ENCODE measurements at regions of chr6 and their contacts with region 1.

Region 1: GRCh38 chr6:32195652-32195901 is 3.1 kb upstream of the GPSM3 start:
- DNase-seq: peak; percentile 100
- ATAC-seq: peak; percentile 88
- H3K4me3 Mint-ChIP-seq: peak overlapping the region; percentile 94
- H3K27ac Mint-ChIP-seq: peak overlapping the region; percentile 99
- H3K4me1 Mint-ChIP-seq: peaks cover 22% of the 10 kb centered on the region
- H3K27me3 Mint-ChIP-seq: no peaks in the 10 kb centered on the region
- CTCF ChIP-seq: no peak

Region 2: DNA sequence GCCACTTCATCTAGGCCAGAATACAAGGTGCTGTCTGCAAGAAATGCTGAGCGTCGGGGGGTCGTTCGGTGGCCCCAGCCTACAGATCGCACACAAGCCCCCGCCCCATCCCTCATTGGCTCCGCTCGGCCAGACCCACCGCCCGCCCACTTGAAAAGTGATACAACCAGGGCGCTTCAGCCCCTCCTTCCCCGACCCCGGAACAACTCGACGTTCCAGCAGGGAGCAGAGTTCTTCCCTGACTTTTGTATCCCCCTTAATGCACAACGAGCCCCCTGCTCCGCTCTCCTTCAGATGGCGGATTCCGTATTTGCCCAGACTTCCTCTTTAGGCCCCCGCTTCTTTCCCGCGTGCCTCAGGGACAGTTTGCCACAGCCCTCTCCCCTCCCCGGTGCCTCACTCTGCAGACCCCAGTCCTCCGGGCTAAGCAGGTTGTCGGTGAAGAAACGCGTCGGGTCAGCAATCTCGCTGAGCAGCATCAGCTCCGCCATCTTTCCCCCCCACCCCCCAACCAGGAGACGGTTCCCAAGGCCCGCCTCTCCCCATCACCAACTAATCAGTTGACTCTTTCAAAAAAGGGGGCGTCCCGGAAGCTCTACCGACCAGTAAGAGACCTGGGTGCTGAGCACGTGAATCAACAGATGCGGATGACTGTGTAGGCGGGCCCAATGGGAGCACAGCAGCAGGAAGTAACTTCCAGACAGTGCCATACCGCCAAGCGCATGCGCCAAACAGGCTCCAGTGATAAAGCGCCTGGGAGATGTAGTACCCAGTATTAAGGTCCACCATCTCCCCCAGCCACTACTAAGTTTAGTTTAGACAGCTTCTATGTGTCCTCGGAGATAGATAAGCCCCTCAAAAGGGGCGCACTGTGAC is 67.6 kb before region 1 on chr6 and contains the start of gene ATF6B:
- CTCF ChIA-PET with region 1: interaction called, 10 read pairs
- POLR2A ChIA-PET with region 1: interaction called, 5 read pairs
- intact Hi-C with region 1: loop called (anchors 2 kb)
- DNase-seq: peak; percentile 100
- ATAC-seq: peak; percentile 93
- H3K4me3 Mint-ChIP-seq: peak within 1 kb of the TSS; percentile 98
- H3K27ac Mint-ChIP-seq: peak within 1 kb of the TSS; percentile 97
- H3K4me1 Mint-ChIP-seq: peaks cover 37% of the 10 kb centered on the region
- H3K27me3 Mint-ChIP-seq: no peaks in the 10 kb centered on the region
- CTCF ChIP-seq: no peak
- total RNA-seq, gene ATF6B: 54.1 to 55.2 TPM

Region 3: GRCh38 chr6:32177788-32178546 is 17.6 kb before region 1 on chr6 and contains the start of gene RNF5:
- CTCF ChIA-PET with region 1: interaction called, 5 read pairs
- POLR2A ChIA-PET with region 1: interaction called, 72 read pairs
- intact Hi-C with region 1: loop called (anchors 2 kb)
- DNase-seq: peak; percentile 98
- ATAC-seq: peak; percentile 88
- H3K4me3 Mint-ChIP-seq: peak within 1 kb of the TSS; percentile 94
- H3K27ac Mint-ChIP-seq: peak within 1 kb of the TSS; percentile 96
- H3K4me1 Mint-ChIP-seq: peaks cover 66% of the 10 kb centered on the region
- H3K27me3 Mint-ChIP-seq: no peaks in the 10 kb centered on the region
- CTCF ChIP-seq: no peak
- total RNA-seq, gene RNF5: 55.4 to 57.9 TPM

Region 4: GRCh38 chr6:32244946-32245398 is 49.4 kb after region 1 on chr6:
- CTCF ChIA-PET with region 1: interaction called, 11 read pairs
- POLR2A ChIA-PET with region 1: no interaction called
- intact Hi-C with region 1: no loop called
- DNase-seq: peak; percentile 77
- ATAC-seq: peak; percentile 75
- H3K4me3 Mint-ChIP-seq: peak overlapping the region; percentile 1
- H3K27ac Mint-ChIP-seq: no peak overlapping the region
- H3K4me1 Mint-ChIP-seq: peaks cover 26% of the 10 kb centered on the region
- H3K27me3 Mint-ChIP-seq: no peaks in the 10 kb centered on the region
- CTCF ChIP-seq: peak; percentile 95